ENCODE measurements at regions of chr6 and their contacts with region 1.

Region 1: DNA sequence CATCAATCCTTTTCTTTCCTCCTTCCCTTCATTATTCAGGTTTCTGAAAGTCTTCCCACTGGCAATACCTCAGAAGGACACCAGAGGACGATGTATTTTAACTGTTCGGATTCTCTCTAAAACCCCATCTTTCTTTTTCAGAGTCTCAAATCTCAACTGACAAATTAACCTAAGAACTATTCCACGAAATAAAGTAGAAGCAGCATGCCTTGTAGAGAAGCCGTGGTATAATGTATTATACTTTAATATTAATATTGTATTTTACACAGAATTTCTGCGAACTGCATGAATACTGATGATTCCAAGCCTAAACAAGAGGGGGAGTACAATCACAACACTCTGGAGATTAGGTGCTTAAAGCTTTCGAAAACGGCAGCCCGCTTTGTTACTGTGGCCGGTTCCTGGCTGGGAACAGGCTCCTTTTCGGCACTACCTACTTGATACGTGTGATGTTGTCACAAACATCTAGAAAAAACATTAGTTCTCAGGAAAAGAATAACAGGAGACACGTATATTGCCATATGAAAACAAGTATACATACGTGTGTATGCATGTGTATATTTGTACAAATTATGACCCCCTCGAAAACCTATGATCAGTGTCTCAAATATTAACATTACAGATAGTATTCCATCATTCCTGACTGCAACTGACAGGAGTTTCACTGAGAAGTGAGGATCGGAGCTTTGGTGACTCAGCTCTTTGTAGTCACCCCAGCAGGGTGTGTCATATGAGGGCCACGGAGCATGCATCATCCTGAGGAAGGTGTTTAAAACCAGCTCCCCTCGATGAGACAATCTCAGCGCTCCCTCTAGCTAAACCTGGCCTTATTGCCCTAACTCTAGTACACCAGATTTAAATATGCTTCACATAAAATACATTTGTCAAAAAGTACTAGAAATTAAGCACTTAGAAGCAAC is 319.7 kb upstream of the TCF21 start:
- DNase-seq: no peak
- ATAC-seq: peak; percentile 63
- H3K4me3 ChIP-seq: peak overlapping the region; percentile 38
- H3K27ac ChIP-seq: peak overlapping the region; percentile 45
- H3K4me1 ChIP-seq: no peaks in the 10 kb centered on the region
- H3K27me3 ChIP-seq: peaks cover 15% of the 10 kb centered on the region
- CTCF ChIP-seq: peak; percentile 81

Region 2: GRCh38 chr6:133788556-133788955 is 219.3 kb after region 1 on chr6:
- intact Hi-C with region 1: no loop called
- DNase-seq: no peak
- ATAC-seq: peak; percentile 31
- H3K4me3 ChIP-seq: no peak overlapping the region
- H3K27ac ChIP-seq: no peak overlapping the region
- H3K4me1 ChIP-seq: no peaks in the 10 kb centered on the region
- H3K27me3 ChIP-seq: no peaks in the 10 kb centered on the region
- CTCF ChIP-seq: no peak

Region 3: DNA sequence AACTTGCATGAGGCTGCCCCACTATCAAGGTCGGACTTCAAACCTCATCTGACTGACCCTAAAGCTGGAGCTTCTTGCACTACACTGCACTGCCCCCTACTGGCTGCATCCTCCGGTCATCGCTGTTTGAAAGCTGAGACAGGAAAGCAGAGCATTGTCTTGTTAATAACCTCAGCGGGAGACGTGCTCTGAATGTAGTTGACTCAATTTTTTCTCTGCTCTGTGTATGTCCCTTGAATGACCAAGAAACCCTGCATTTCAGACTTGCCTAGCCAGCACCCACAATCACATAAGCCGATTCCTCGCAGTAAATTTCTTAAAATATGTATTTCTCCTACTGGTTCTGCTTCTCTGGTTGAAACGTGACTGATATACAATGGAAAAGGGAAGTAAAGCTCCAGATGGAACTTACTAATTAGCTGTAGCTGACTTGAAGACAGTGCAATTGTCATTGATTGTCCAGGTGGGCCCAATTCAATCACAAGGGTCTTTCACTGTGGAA is 347.5 kb after region 1 on chr6:
- intact Hi-C with region 1: loop called (anchors 5 kb)
- DNase-seq: peak; percentile 87
- ATAC-seq: peak; percentile 93
- H3K4me3 ChIP-seq: no peak overlapping the region
- H3K27ac ChIP-seq: no peak overlapping the region
- H3K4me1 ChIP-seq: no peaks in the 10 kb centered on the region
- H3K27me3 ChIP-seq: no peaks in the 10 kb centered on the region
- CTCF ChIP-seq: peak; percentile 88